ENCODE measurements at regions of chr7 and their contacts with region 1.

Region 1: GRCh38 chr7:155230168-155230593 is 67.5 kb upstream of the INSIG1 start:
- DNase-seq: peak; percentile 95
- H3K4me3 Mint-ChIP-seq: peak overlapping the region; percentile 39
- H3K27ac Mint-ChIP-seq: peak overlapping the region; percentile 87
- H3K4me1 Mint-ChIP-seq: peaks cover 14% of the 10 kb centered on the region
- H3K27me3 Mint-ChIP-seq: no peaks in the 10 kb centered on the region
- CTCF ChIP-seq: no peak

Region 2: DNA sequence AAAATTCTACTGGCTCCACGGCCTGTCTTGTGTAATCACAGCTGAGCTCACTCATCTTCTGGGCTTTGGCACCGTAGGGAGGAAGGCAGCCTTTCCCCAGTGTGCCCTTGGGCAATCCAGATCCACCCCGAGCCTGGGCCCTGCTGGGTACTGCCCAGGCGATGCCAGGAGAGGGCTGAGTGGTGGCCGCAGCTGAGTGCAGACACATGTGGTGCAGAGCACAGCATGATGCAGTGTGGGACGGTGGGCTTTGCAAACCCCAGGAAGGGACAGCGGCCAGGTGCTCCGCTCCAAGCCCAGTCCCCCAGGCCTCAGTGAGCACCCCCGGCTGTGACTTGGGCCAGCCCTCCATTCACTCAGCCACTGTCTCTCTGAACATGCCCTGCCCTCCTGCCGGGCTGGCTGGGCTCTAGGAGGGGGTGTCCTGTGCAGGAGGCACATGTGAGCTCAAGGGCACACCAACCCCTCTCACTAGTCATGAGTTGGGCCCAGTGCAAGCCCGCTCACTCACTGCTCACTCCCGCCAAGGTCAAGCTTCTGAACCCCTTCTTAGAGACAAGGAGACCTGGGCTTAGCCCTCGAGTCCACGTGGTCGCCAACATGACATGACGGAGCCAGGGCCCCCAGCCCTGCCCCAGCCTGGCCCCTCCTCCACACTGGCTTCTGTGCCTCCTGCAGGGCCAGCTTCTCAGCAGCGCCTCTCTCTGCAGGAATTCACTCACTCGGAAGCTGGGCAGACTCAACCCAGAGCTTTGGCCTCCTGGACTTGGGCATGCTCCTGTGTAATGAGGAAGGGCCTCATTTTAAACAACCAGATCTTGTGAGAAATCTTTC is 10.0 kb before region 1 on chr7:
- CTCF ChIA-PET with region 1: interaction called, 4 read pairs
- POLR2A ChIA-PET with region 1: interaction called, 12 read pairs
- intact Hi-C with region 1: no loop called
- DNase-seq: peak; percentile 69
- H3K4me3 Mint-ChIP-seq: no peak overlapping the region
- H3K27ac Mint-ChIP-seq: no peak overlapping the region
- H3K4me1 Mint-ChIP-seq: peaks cover 15% of the 10 kb centered on the region
- H3K27me3 Mint-ChIP-seq: no peaks in the 10 kb centered on the region
- CTCF ChIP-seq: no peak

Region 3: DNA sequence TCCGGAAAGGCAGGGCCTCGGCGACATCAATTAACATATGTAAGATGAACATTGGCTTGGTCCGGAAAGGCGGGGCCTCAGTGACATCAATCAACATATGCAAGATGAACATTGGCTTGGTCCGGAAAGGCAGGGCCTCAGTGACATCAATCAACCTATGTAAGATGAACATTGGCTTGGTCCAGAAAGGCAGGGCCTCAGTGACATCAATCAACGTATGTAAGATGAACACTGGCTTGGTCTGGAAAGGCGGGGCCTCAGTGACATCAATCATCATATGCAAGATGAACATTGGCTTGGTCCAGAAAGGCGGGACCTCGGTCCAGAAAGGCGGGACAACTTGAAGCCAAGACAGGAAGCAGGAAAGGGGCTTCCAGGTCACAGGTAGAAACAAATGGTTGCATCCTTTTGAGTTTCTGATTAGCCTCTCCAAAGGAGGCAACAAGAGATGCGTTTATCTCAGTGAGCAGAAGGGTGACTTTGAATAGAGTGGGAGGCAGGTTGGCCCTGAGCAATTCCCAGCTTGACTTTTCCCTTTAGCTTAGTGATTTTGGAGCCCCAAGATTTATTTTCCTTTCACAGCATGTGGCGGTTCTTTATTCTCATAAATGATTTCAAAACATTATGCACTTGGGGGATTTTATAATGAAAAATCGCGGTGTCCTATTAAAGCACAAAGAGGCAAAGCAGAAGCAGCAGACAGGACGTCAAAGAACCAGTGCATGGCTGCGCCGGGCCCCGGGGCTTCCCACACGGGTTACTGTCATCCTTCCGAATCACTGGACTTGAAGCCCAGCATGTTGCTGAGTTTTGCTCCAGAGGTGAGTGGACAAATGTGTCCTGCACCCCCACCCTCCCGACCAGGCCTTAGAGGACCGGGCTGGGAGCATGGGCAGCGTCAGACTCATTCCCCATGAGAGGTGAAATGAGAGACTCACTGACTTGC is 184.6 kb after region 1 on chr7:
- CTCF ChIA-PET with region 1: no interaction called
- POLR2A ChIA-PET with region 1: no interaction called
- intact Hi-C with region 1: no loop called
- DNase-seq: no peak
- H3K4me3 Mint-ChIP-seq: no peak overlapping the region
- H3K27ac Mint-ChIP-seq: no peak overlapping the region
- H3K4me1 Mint-ChIP-seq: no peaks in the 10 kb centered on the region
- H3K27me3 Mint-ChIP-seq: peaks cover 42% of the 10 kb centered on the region
- CTCF ChIP-seq: no peak

Measured in MCF 10A (cell line).